Ovary (tissue), 10 donors: ENCODE measurements at regions of chrX and their contacts with region 1.

Region 1: DNA sequence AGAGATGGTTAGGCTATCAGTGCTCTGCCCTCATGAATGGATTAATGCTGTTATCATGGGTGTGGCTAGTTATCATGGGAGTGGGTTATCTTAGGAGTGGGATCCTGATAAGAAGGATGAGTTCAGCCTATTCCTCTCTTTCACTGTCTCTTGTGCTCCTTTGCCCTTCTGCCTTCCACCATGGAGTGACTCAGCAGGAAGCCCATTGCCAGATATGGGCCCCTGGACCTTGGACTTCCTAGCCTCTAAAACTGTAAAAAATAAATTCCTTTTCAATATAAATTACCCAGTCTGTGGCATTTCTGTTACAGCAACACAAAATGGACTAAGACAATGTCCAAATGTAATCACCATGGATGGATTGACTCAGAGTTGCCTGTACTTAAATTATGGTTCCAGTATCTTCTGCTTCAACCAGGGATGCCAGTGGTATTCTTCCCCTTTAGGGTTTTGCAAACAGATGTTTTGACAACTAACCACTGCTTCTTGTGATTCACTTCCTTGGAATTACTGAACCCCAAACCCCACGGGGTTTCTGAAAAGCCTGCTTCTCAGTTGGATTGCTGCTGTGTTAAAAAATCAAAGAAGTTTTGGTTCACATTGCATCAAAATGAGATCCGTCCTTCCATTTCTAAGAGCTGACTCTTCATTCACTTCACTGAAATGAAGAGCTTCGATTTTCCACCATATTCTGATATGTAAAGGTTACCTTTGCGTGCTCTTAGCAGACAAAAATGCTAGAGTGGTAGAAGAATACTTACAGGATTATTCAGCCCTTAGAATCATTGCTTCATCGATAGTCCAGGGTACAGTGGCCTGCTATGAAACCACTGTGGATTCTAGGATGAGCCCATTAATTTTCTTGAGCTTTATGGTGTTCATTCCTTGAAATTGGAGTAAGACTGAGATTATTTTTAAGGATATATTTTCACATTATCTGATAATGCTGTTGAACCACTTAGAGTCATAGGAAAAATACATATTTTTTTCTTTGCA is 107.7 kb downstream of the FRMPD4 start:
- DNase-seq: no peak
- H3K4me3 ChIP-seq: no peak overlapping the region
- H3K27ac ChIP-seq: no peak overlapping the region
- H3K4me1 ChIP-seq: no peaks in the 10 kb centered on the region
- H3K27me3 ChIP-seq: no peaks in the 10 kb centered on the region
- CTCF ChIP-seq: no peak
- EP300 ChIP-seq: no peak
- POLR2A ChIP-seq: no peak

Region 2: GRCh38 chrX:12080265-12080664 is 165.7 kb before region 1 on chrX:
- intact Hi-C with region 1: loop called in 1 of 4 experiments (anchors 5 kb)
- DNase-seq: no peak
- H3K4me3 ChIP-seq: no peak overlapping the region
- H3K27ac ChIP-seq: no peak overlapping the region
- H3K4me1 ChIP-seq: no peaks in the 10 kb centered on the region
- H3K27me3 ChIP-seq: no peaks in the 10 kb centered on the region
- CTCF ChIP-seq: no peak
- EP300 ChIP-seq: no peak
- POLR2A ChIP-seq: no peak

Region 3: GRCh38 chrX:12292996-12293765 is 47.2 kb after region 1 on chrX:
- intact Hi-C with region 1: loop called in 1 of 4 experiments (anchors 1 kb)
- DNase-seq: no peak
- H3K4me3 ChIP-seq: no peak overlapping the region
- H3K27ac ChIP-seq: no peak overlapping the region
- H3K4me1 ChIP-seq: no peaks in the 10 kb centered on the region
- H3K27me3 ChIP-seq: no peaks in the 10 kb centered on the region
- CTCF ChIP-seq: no peak
- EP300 ChIP-seq: no peak
- POLR2A ChIP-seq: no peak